HCT116 (cell line): ENCODE measurements at regions of chr20 and their contacts with region 1.

Region 1: DNA sequence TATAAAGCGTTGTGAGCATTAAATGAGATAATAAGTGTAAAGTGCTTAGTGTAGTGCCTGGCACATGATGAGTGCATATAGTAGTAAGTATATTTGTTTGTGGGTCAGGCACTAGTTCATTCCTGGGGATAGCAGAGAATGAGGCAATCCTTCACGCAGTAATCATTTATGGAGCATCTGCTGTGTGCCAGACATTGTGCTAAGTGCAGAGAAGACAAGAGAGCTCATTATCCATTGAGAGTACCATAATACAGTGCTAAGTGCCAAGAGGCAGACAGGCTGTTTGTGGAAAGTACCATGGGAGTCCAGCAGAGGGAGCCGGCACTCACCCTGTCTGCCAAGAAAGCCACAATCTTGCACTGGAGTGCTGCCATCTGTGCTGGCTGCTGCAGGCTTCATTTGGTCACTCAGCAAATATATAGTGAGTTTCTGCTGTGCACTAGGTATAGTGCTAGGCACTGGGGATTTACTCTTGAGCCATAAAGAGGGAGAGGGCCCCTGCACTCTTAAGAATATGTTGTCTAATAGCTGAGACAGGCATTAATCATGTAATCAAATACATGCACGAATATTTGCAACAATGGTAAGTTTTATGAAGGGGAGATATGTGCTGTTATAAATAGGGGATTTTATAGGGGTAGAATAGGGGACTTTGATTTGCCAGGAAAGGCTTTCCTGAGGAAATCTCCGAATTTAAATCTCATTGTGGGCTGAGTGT is 12.9 kb upstream of the MROH8 start:
- DNase-seq: peak; percentile 43
- ATAC-seq: peak; percentile 90
- H3K4me3 ChIP-seq: no peak overlapping the region
- H3K27ac ChIP-seq: no peak overlapping the region
- H3K4me1 ChIP-seq: peaks cover 0 to 7% of the 10 kb centered on the region in 2 experiments; a peak in 1 of 4 replicates
- H3K27me3 ChIP-seq: no peaks in the 10 kb centered on the region
- CTCF ChIP-seq: peak; percentile 50 to 95 (median 90); a peak in 5 of 6 replicates
- POLR2A ChIP-seq: no peak
- RAD21 ChIP-seq: peak; percentile 31; the same call in 1 of the 2 replicates

Region 2: DNA sequence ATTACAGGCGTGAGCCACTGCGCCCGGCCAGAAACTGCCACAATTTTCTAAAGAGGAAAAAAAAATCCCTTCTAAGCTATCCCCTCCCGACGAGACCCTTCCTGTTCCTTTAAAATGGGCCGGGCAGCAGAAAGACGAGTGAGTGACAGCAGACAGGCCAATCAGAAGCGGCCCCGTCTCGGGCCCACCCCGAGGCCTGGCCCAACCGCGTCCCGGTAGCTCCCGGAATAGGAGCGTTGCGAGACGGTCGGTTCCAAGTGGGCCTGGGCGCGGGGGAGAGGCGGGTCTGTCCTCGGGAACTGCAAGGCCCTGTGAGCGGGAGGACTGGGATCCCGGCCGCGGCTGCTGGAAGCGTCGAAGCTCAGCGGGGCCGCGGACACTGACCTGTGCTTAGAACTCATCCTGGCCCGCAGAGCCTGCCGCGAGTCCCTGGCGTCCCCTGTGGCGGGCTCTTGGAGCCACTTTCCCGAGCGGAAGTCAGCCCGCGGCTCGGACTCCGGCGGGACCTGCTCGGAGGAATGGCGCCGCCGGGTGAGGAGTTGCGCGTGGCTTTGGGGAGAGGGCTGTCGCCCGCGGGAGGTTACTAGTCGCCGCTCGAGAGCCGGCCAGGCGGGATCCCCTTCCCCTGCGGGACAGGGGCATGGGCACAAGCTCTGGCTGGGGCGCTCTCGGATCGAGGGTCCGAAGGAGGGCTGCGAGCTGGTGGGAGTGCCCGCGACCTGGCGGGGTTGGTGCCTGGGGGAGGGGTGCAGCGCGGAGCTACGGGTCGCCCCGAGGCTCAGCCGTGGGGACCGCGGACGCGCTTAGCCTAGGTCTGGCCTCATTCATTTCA is 13.2 kb before region 1 on chr20 and contains the starts of genes MROH8 and RPN2:
- CTCF ChIA-PET with region 1: interaction called, 29 read pairs
- POLR2A ChIA-PET with region 1: interaction called, 11 read pairs
- RAD21 ChIA-PET with region 1: no interaction called
- intact Hi-C with region 1: no loop called
- DNase-seq: peak; percentile 96
- ATAC-seq: peak; percentile 96
- H3K4me3 ChIP-seq: peak within 1 kb of the TSS; percentile 67 to 69
- H3K27ac ChIP-seq: peak within 1 kb of the TSS; percentile 85
- H3K4me1 ChIP-seq: peaks cover 2 to 15% of the 10 kb centered on the region in 2 experiments; a peak in 3 of 4 replicates
- H3K27me3 ChIP-seq: no peaks in the 10 kb centered on the region
- CTCF ChIP-seq: no peak
- POLR2A ChIP-seq: peak; percentile 24
- RAD21 ChIP-seq: no peak
- total RNA-seq, gene MROH8: 0.79 TPM
- total RNA-seq, gene RPN2: 220 TPM

Region 3: GRCh38 chr20:37202267-37202943 is 10.1 kb after region 1 on chr20:
- CTCF ChIA-PET with region 1: interaction called, 12 read pairs
- POLR2A ChIA-PET with region 1: no interaction called
- RAD21 ChIA-PET with region 1: no interaction called
- intact Hi-C with region 1: no loop called
- DNase-seq: peak; percentile 35
- ATAC-seq: peak; percentile 85
- H3K4me3 ChIP-seq: no peak overlapping the region
- H3K27ac ChIP-seq: no peak overlapping the region; the same call in 1 of the 2 replicates
- H3K4me1 ChIP-seq: peaks cover 6 to 7% of the 10 kb centered on the region in 2 experiments; a peak in 3 of 4 replicates
- H3K27me3 ChIP-seq: no peaks in the 10 kb centered on the region
- CTCF ChIP-seq: peak; percentile 49 to 84 (median 78); a peak in 5 of 6 replicates
- POLR2A ChIP-seq: no peak
- RAD21 ChIP-seq: peak; percentile 42

Region 4: GRCh38 chr20:37209661-37210314 is 17.5 kb after region 1 on chr20:
- CTCF ChIA-PET with region 1: interaction called, 10 read pairs
- POLR2A ChIA-PET with region 1: no interaction called
- RAD21 ChIA-PET with region 1: no interaction called
- intact Hi-C with region 1: no loop called
- DNase-seq: no peak
- ATAC-seq: no peak
- H3K4me3 ChIP-seq: no peak overlapping the region
- H3K27ac ChIP-seq: no peak overlapping the region
- H3K4me1 ChIP-seq: no peaks in the 10 kb centered on the region
- H3K27me3 ChIP-seq: no peaks in the 10 kb centered on the region
- CTCF ChIP-seq: no peak
- POLR2A ChIP-seq: no peak
- RAD21 ChIP-seq: no peak

Region 5: DNA sequence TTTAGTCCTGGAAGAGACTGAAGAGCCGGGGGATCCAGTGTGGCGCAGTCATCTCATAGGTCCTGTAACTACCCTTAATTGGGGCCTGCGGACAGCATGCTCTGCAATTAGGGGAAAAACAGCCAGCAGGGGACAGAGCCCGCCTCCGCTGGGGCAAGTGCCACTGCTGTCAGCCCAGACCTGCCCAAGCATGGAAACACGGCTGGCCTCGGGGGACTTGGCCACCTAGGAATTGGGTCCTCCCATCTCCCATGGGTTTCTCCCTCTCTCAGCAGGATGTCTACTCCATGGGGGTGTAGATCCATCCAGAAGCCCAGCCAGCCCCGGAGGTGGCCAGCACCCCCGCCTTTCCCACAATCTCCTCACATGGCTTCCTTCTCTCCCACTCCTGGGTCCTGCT is 65.7 kb after region 1 on chr20:
- CTCF ChIA-PET with region 1: no interaction called
- POLR2A ChIA-PET with region 1: no interaction called
- RAD21 ChIA-PET with region 1: no interaction called
- intact Hi-C with region 1: no loop called
- DNase-seq: no peak
- ATAC-seq: no peak
- H3K4me3 ChIP-seq: no peak overlapping the region
- H3K27ac ChIP-seq: no peak overlapping the region
- H3K4me1 ChIP-seq: no peaks in the 10 kb centered on the region
- H3K27me3 ChIP-seq: 0 out of 2 replicates have a peak, but pooled peaks cover 14% of the 10 kb centered on the region
- CTCF ChIP-seq: no peak
- POLR2A ChIP-seq: no peak
- RAD21 ChIP-seq: no peak